ENCODE measurements at regions of chr11 and their contacts with region 1.

Region 1: GRCh38 chr11:123741159-123742028 is at the start of gene ZNF202:
- DNase-seq: peak; percentile 97
- H3K4me3 Mint-ChIP-seq: peak within 1 kb of the TSS; percentile 90
- H3K27ac Mint-ChIP-seq: peak within 1 kb of the TSS; percentile 92
- H3K4me1 Mint-ChIP-seq: peaks cover 28% of the 10 kb centered on the region
- H3K27me3 Mint-ChIP-seq: peaks cover 21% of the 10 kb centered on the region
- total RNA-seq, gene ZNF202: 22.6 and 22.9 TPM in 2 replicates

Region 2: GRCh38 chr11:123753110-123753509 is 11.7 kb after region 1 on chr11:
- intact Hi-C with region 1: loop called (anchors 1 kb)
- DNase-seq: no peak
- H3K4me3 Mint-ChIP-seq: peak overlapping the region; percentile 44
- H3K27ac Mint-ChIP-seq: peak overlapping the region; percentile 87
- H3K4me1 Mint-ChIP-seq: peaks cover 44% of the 10 kb centered on the region
- H3K27me3 Mint-ChIP-seq: peaks cover 28% of the 10 kb centered on the region

Region 3: DNA sequence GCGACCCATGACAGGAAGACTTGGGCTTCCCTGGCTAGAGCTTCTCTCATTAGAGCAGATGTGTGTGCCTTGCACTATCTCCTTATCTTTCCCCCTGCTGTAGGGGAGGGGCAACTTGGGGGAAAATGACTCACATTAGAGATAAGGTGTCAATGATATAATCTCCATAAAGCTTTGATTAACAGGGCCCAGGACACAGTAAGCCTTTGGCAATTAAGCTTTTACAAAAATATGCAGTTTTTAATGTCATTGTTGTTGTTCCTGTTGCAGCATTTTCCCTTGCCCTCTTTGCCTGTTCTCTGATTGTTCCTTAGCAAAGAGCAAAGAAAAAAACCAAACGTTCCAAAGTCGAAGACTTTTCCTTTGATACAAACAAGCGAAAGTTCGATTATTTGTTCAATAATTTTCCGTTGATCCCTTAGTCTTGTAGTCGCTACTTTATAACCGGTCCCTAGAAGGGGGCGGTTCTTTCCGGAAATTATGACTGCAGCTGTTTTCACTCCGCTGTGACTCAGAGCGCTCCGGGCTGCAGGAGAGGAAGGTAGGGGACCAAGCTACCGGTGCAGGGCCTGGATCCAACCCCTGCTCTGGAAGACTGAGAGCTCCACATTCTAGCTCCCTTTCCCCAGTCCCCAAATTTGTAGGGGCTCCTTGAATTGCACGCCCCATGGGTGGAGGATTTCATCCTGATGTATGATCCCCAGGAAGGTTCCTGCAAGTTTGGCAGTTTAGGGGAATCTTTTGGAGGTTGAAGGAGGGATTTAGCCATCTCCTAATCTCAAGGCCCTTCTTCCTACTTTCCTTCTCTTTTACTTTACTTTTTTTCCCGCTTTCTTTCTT is 373.8 kb after region 1 on chr11 and contains the start of gene VWA5A:
- intact Hi-C with region 1: loop called (anchors 5 kb)
- DNase-seq: peak; percentile 93
- H3K4me3 Mint-ChIP-seq: peak within 1 kb of the TSS; percentile 86
- H3K27ac Mint-ChIP-seq: peak within 1 kb of the TSS; percentile 86
- H3K4me1 Mint-ChIP-seq: peaks cover 24% of the 10 kb centered on the region
- H3K27me3 Mint-ChIP-seq: peaks cover 12% of the 10 kb centered on the region
- total RNA-seq, gene VWA5A: 6.5 and 6.8 TPM in 2 replicates

Region 4: GRCh38 chr11:124622531-124623451 is 881.4 kb after region 1 on chr11 and contains the start of gene TBRG1:
- intact Hi-C with region 1: loop called (anchors 5 kb)
- DNase-seq: peak; percentile 95
- H3K4me3 Mint-ChIP-seq: peak within 1 kb of the TSS; percentile 98
- H3K27ac Mint-ChIP-seq: peak within 1 kb of the TSS; percentile 96
- H3K4me1 Mint-ChIP-seq: peaks cover 22% of the 10 kb centered on the region
- H3K27me3 Mint-ChIP-seq: peaks cover 15% of the 10 kb centered on the region
- total RNA-seq, gene TBRG1: 31.0 and 31.6 TPM in 2 replicates

Measured in activated CD4-positive, alpha-beta T cell treated with anti-CD3 and anti-CD28 coated beads, Interleukin-2, amount 10 ng/mL, durations not matched to agents 24 days and 14 days (primary cell).